ENCODE measurements at regions of chr9 and their contacts with region 1.

Region 1: DNA sequence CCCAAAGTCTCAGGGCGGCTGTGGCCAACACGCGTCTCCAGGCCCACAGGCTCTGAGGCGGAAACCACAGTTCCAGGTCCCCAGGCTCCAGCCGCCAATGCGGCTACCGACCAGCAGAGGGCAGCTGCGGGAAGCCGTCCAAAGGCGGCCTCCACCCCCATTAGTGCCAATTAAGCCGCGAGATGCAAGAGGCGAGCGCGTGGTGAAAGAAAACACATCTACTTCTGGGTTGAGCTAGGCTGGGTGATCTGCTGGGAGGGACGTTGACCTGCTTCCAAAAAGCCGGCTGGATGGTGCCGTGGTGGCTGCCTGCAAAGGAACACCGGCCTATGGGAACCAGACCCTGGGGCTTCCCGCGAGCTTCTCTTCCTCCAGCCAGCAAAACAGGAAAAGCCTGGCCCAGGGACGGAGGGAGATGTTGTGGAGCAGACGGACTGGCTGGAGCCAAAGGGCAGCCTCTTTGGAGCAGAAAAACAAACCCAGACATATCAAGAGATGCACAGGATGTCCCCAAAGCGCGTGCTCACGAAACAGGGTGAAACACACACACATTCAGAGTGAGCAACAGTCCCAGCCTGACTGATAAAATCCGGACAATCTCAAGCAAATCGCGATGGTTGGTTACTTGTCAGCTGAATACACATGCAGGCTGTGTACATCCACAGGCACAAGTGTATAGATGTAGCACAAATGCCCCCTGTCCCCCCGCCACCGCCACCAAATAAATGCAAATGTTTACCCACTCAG is 187.1 kb upstream of the BRINP1 start:
- DNase-seq: peak; percentile 57
- H3K4me3 ChIP-seq: no peak overlapping the region
- H3K27ac ChIP-seq: no peak overlapping the region
- H3K4me1 ChIP-seq: no peaks in the 10 kb centered on the region
- CTCF ChIP-seq: peak; percentile 86

Region 2: DNA sequence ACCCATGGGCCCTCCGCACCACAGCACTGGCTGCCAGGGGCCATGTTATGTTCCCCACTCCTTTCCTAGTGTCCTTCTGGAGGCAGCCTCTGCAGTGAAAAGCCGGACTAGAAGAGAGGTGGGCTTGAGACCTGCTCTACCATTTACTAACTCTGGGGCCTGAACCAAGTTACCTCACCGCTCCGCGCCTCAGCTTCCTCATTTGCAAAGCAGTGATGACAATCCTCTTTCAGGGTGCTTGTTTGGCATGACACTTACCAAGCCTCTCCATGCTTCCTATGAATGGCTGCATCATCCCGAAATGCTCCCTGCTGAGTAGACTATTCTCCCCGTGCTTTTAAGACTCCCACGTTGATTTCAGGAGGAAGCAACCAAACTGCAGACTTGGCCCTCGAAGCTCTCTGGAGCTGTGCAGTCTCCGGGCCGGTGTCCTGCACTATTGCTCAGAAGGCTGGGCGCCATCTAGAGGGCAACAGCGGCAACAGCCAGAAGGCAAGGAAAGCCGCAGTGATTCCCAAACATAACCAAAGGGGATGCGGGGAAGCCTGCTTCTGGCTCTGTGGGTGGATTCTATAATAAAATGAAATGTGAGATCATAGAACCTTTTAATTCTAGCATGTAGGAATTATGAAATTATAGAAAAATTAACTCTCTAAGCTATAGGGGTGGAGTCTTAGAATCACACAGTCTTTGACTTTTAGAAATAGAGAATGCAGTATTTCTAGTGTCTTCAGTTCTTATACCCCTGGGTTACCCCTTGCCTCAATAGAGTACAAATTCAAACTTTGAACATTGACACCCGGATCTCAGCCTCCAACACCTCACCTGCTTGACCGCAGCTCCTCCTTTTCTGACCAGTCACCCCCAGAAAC is 412.8 kb after region 1 on chr9:
- CTCF ChIA-PET with region 1: no interaction called
- POLR2A ChIA-PET with region 1: no interaction called
- intact Hi-C with region 1: loop called (anchors 2 kb)
- DNase-seq: peak; percentile 60
- H3K4me3 ChIP-seq: no peak overlapping the region
- H3K27ac ChIP-seq: no peak overlapping the region
- H3K4me1 ChIP-seq: no peaks in the 10 kb centered on the region
- CTCF ChIP-seq: peak; percentile 96

Region 3: DNA sequence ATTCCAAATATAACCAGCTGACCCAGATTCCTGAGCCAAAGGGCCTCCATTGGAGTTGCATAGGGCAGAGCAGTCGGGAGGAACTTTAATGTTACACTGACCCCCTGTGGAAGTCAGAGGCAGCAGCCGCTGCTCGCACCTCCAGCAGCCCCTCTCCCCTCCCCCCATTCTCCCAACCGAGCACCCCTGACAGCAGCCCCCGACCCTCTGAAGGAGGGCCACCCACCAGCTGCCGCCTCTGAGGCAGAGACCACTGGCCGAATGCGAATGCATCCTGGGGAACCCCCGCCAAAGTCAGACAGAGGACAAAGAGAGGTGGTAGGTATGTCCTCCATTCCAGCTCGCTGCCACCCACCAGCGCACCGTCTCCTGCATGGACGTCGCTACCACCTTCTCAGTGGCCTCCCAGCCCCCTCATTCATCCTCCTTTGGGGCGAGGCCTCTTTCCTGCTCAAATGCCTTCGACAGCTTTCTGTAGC is 792.7 kb after region 1 on chr9:
- CTCF ChIA-PET with region 1: no interaction called
- POLR2A ChIA-PET with region 1: no interaction called
- intact Hi-C with region 1: loop called (anchors 2 kb)
- DNase-seq: peak; percentile 45
- H3K4me3 ChIP-seq: no peak overlapping the region
- H3K27ac ChIP-seq: no peak overlapping the region
- H3K4me1 ChIP-seq: no peaks in the 10 kb centered on the region
- CTCF ChIP-seq: peak; percentile 81